Activated B cell treated with CpG ODN at 0.5 μM for 24 hours (primary cell): ENCODE measurements at regions of chr15 and their contacts with region 1.

Region 1: GRCh38 chr15:71448688-71449114 is 333.4 kb downstream of the THSD4 start:
- DNase-seq: no peak
- ATAC-seq: no peak
- H3K4me3 Mint-ChIP-seq: no peak overlapping the region
- H3K27ac Mint-ChIP-seq: no peak overlapping the region
- H3K4me1 Mint-ChIP-seq: no peaks in the 10 kb centered on the region
- H3K27me3 Mint-ChIP-seq: peaks cover 8% of the 10 kb centered on the region
- CTCF ChIP-seq: no peak

Region 2: GRCh38 chr15:71651750-71652186 is 203.1 kb after region 1 on chr15:
- CTCF ChIA-PET with region 1: no interaction called
- POLR2A ChIA-PET with region 1: no interaction called
- intact Hi-C with region 1: loop called (anchors 10 kb)
- DNase-seq: no peak
- ATAC-seq: no peak
- H3K4me3 Mint-ChIP-seq: no peak overlapping the region
- H3K27ac Mint-ChIP-seq: no peak overlapping the region
- H3K4me1 Mint-ChIP-seq: no peaks in the 10 kb centered on the region
- H3K27me3 Mint-ChIP-seq: no peaks in the 10 kb centered on the region
- CTCF ChIP-seq: no peak